Posterior cingulate gyrus (tissue), 11 donors: ENCODE measurements at regions of chr10 and their contacts with region 1.

Region 1: GRCh38 chr10:100562008-100562711 is 26.4 kb downstream of the HIF1AN start:
- DNase-seq: peak; percentile 46 to 97 (median 70)

Region 2: DNA sequence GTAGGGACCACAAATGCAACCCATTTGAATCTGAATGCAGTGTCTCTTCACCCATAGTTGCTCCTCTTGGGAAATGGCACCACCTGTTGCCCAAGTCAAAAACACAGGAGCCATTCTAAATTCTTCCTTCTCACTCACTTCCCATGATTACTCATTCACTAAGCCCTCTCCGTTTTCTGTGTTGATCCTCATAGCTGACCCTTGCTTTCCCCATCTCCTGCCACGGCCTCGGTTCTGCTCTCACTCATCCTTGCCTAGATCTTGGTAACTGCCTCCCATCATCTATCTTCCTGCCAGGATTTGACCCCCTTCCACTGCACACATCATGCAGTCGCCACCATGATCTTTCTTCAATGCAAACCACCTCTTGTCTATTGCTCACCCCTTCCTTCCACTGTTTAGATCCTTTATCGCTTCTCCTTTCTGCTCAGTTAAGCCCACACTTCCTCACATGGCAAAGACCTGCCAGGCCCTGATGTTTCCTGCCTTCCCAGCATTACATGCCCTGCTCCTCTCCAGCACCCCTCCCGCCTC is 461.4 kb before region 1 on chr10:
- intact Hi-C with region 1: no loop called
- DNase-seq: no peak

Region 3: DNA sequence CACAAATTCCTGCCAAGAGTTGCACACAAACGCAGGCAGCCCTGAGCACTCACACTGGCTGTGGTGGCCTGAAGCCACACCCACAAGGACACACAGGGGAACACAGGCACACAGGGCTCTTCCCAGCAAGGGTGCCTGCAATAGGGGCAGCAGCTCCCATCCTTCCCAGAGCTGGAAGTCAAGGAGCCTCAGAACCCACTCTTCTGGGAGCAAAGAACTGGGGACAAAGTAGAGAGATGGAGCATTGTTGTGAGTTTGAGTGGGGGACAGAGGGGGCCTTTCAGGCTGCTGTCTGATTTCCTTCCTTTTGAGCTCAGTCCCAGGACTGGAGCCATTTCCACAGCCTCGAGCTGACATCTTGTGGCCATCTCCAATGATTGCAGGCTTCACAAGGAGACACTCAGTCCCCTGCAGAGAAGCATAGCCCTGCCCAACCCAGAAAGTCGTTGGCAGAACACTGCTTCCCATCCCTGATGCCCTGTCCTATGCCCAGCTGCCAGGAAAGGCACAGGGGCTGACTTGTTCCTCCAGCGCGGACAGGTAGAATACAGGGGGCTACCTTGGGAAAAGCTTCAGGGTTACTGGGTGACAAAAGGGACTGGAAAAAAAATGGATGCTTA is 316.2 kb after region 1 on chr10:
- intact Hi-C with region 1: loop called (anchors 2 kb)
- DNase-seq: peak; percentile 51 to 95 (median 68)

Region 4: GRCh38 chr10:101238732-101239105 is 676.6 kb after region 1 on chr10:
- intact Hi-C with region 1: no loop called
- DNase-seq: peak in 2 of 10 donors; percentile 15 to 59